AG04449 (cell line): ENCODE measurements at regions of chr3 and their contacts with region 1.

Region 1: DNA sequence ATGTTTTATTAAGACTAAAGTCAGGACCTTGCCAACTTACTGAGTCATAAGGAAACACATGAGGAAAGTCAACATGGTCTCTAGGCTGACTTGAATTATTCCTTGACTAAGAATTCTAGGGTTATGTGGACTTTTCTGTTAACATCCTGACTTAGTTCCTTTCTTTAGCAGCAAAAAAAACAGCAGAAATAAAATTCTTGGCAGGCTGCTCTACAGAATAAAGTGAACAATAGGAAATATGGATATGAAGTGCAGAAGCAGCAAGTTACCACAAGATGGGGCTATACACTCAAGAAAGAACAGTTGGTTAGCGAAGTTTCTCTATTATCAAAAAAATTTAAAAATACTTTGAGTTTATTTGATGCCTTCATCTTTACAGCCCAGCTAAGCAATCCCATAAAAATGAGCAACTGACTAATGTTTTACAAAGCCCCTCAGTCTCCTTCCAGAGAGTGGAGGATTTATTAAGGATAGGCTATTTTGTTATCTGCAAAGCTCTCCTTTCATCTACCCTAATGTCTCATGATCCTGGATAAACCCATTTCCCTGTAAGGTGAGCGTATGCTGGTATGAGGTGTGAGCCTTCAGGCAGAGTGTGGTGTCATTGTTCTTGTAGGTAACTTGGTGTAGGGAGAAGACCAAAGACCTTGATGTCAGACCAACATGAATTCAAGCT is 23.1 kb upstream of the MCCC1 start:
- DNase-seq: peak; percentile 47
- H3K4me3 ChIP-seq: no peak overlapping the region
- CTCF ChIP-seq: peak; percentile 54

Region 2: DNA sequence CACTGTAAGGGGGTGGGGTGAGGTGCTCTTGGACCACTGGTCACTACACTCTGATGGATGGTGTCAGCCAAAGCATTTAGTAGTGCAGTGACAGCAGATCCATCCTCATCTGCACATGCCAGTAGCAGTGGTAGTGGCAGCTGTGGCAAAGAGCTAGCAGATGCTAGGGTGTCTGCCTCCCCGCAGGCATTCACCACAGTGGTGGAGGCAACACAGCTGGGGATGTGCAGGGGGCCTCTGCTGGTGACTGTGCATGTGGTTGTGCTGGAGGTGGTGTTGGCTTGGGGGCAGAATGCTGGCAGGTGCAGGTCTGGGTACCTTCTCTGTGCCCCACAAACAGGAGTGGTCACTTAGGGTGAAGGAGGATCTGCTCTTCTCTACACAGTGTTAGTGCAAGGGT is 122.6 kb before region 1 on chr3:
- CTCF ChIA-PET with region 1: no interaction called
- POLR2A ChIA-PET with region 1: no interaction called
- DNase-seq: no peak
- H3K4me3 ChIP-seq: no peak overlapping the region
- CTCF ChIP-seq: no peak

Region 3: DNA sequence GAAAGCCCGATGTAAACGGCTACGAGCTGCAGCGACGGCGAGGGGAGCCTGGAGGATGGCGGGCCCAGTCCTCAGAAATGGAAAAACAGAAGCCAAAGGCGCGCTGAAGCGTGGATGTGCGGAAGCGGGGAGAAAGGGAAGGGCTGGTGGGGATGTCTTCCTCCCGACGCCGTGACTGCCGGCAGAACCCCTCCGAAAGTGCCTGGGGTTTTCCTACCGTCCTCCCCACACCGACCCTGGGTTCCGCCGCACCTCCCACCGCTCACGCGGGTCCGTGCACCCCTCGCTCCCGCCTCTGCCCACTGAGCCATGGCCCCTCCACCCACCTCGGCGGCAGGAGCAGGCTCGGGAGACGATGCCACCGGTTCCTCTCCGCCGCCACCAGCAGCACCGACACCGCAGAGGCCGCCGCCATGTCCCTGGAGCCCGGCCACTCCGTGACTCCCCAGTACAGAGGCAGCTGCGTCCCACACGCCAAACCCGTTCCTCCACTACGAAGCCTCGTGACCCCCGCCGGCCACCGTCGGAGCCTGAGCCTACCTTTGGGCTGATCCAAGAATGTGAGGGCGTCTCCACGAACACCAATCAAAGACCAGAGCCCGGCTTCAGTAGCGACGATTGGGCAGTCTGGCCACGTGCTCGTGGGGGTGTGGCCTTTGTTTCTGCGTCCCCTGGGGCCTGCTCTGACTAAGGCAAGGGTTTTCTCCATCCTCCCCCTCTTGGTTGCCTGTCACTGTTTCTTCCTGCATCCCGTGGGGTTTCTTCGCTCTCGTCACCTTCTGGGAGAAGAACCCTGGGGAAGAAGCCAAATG is 23.2 kb before region 1 on chr3 and contains the start of gene MCCC1:
- CTCF ChIA-PET with region 1: interaction called, 13 read pairs
- POLR2A ChIA-PET with region 1: no interaction called
- DNase-seq: peak; percentile 90
- H3K4me3 ChIP-seq: peak within 1 kb of the TSS; percentile 95
- CTCF ChIP-seq: no peak

Region 4: GRCh38 chr3:183142199-183142598 is 19.8 kb after region 1 on chr3:
- CTCF ChIA-PET with region 1: interaction called, 29 read pairs
- POLR2A ChIA-PET with region 1: no interaction called
- DNase-seq: no peak
- H3K4me3 ChIP-seq: no peak overlapping the region
- CTCF ChIP-seq: no peak

Region 5: DNA sequence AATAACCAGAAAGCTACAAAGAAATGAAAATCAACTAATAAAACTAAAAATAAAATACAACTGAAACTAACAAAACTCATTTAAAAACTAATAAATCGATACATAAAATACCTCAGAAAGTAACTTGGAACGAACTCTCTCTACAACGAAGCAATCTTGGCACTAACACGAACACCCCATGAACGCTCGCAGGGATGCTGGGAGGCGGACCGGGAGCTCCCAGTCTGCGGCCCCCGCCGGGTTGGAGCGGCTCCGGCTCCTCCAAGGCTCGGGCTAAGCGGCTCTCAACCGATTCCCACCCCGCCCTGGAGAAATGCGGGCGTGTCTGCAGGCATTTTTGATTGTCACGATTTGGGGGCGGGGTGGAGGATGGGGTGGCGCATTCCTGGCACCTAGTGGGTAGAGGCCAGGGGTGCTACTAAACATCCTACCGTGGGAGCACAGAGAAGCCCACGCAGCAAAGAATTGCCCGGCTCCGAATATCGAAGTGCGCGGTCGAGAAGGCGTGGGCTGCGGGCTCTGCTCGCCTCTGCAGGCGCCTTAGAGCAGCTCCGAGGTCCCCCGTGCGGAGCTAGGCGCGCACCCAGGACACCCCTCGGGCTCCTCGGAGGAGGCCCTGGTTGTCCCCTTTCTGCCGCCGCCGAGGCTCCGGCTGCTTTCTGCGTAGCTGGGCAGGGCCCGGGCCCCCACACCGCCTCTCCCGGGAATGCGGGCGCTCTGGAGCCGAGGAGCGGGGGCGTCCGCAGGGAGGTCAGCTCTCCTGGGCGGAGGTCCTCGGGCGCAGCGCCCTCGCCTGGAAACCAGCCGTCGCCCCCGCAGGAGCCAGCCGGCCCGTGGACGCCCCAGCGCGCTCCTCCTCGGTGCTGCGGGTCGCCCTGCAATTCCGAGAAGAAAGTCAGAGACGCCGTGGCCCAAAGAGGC is 56.5 kb after region 1 on chr3:
- CTCF ChIA-PET with region 1: interaction called, 84 read pairs
- POLR2A ChIA-PET with region 1: no interaction called
- DNase-seq: no peak
- H3K4me3 ChIP-seq: peak overlapping the region; percentile 51
- CTCF ChIP-seq: peak; percentile 19

Region 6: DNA sequence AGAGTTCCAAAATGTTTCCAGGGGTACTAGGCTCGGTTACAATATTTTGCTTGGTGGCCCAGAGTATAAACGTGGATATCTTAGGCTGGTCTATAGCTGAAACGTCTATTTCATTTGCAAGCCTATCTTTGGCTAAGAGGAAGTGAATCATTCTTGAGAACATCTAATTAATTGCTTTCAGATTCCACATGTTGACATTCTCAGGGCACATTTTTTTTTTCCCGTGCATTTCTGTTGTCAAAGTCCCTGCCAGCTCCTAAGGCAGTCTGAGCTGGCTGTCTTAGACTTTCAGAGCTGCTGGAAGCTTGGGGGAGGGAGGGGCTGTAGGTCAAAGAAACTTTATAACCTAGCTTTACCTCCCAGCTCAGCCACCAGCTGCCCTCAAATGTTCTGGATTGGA is 63.3 kb after region 1 on chr3:
- CTCF ChIA-PET with region 1: interaction called, 84 read pairs
- POLR2A ChIA-PET with region 1: no interaction called
- DNase-seq: peak; percentile 59
- H3K4me3 ChIP-seq: no peak overlapping the region
- CTCF ChIP-seq: no peak

Region 7: GRCh38 chr3:183385698-183386613 is 263.6 kb after region 1 on chr3:
- CTCF ChIA-PET with region 1: interaction called, 202 read pairs
- POLR2A ChIA-PET with region 1: no interaction called
- DNase-seq: peak; percentile 29
- H3K4me3 ChIP-seq: no peak overlapping the region
- CTCF ChIP-seq: peak; percentile 66

Region 8: DNA sequence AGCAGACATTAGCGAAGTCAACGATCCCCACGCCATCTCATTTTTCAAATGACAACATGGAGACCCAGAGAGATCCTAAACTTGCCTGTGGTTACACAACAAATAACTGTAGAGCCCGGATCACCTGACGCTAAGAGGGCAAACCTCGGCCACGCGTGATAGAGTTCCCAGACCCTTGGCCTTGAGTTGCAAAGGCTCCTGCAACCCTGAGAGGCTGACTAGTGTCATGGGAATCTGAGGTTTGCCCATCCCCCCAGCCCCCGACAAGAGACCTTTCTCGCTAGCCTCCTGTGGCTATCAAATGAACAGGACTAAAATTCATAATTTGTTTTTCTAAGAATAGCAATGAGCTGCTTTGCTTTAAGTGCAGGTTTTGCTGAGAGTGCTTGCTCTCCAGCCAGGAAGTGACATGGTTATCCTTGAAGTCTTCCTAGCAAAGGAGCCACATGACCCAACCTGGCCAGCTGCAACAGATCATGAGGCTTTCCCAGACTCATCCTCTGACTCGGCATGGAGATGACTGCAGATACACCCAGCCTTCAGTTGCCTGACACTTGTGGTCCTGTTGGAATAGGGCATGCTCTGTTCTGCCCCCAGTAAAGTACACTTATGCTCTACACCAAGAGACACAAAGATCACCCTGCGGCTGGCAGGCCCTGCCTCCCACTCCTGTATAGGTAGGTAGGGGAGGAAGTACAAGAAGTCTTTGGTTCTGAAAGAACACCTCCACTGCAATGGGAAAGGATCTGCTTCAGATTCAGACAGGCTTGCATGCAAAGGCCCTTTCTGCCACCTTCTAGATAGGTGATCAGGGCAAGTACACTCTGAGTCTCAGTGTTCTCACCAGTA is 270.0 kb after region 1 on chr3:
- CTCF ChIA-PET with region 1: interaction called, 24 read pairs
- POLR2A ChIA-PET with region 1: no interaction called
- DNase-seq: no peak
- H3K4me3 ChIP-seq: no peak overlapping the region
- CTCF ChIP-seq: no peak